ENCODE measurements at regions of chr10 and their contacts with region 1.

Region 1: GRCh38 chr10:110326351-110327032 is 21.8 kb upstream of the SMNDC1 start:
- DNase-seq: peak in 1 of 2 experiments; percentile 89
- H3K4me3 ChIP-seq: peak overlapping the region; percentile 20; the same call in 1 of the 2 replicates
- H3K27ac ChIP-seq: peak overlapping the region; percentile 99
- H3K4me1 ChIP-seq: peaks cover 62% of the 10 kb centered on the region
- H3K27me3 ChIP-seq: no peaks in the 10 kb centered on the region
- CTCF ChIP-seq: no peak

Region 2: DNA sequence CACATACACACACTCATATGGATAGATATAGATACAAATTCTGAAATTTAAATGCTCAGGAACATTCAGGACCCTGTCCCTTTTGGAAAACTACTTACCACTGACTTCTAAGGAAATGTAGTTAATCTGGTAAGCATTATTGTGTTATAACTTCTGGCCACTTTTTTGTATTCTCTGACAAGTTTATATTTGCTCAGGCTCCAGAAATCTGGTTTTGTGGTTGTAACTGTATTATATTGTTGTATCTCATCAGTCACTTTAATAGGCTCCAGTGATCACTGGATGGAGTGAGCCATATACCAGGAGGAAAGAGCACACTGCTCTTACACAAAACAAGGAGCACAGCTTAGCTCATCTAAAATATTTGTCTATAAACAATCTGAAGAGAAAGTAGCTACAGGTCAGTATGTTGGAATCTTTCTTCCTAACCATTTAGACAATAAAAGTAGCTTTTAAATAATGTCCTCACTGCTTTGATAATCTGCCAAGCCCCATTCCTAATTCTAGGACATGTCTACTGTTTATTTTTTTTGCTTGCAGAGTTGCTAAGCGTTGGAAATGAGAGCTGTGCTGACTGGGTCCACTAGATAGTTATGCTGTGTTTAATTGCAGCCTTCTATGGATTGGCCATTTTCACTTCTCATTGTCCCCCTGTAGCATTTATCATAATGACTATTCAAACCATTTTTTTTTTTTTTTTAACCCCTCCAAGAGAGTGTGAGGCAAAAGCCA is 65.6 kb before region 1 on chr10:
- CTCF ChIA-PET with region 1: no interaction called
- POLR2A ChIA-PET with region 1: no interaction called
- intact Hi-C with region 1: no loop called
- DNase-seq: no peak
- H3K4me3 ChIP-seq: no peak overlapping the region
- H3K27ac ChIP-seq: no peak overlapping the region
- H3K4me1 ChIP-seq: no peaks in the 10 kb centered on the region
- H3K27me3 ChIP-seq: no peaks in the 10 kb centered on the region
- CTCF ChIP-seq: no peak

Region 3: DNA sequence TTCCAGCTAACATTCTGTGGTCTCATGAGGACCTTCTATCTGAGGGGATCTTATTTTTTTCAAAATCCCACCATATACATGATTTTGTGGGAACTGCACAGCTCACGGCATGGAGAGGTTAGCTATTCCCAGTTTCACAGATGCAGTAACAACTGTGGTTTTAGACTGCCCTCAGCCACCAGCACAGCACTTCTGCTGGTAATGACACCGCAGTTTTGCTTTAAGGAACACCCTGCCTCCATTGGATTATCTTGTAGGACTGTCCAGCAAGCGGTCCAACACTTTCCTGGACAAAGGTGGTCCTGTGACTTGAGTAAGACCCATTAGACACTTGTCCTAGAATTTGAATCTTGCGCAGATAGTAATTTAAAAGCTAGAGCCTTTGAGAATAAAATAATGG is 43.5 kb after region 1 on chr10:
- CTCF ChIA-PET with region 1: interaction called, 19 read pairs
- POLR2A ChIA-PET with region 1: no interaction called
- intact Hi-C with region 1: no loop called
- DNase-seq: no peak
- H3K4me3 ChIP-seq: no peak overlapping the region
- H3K27ac ChIP-seq: no peak overlapping the region; the same call in 1 of the 2 replicates
- H3K4me1 ChIP-seq: peaks cover 55% of the 10 kb centered on the region
- H3K27me3 ChIP-seq: no peaks in the 10 kb centered on the region
- CTCF ChIP-seq: no peak